Naive thymus-derived CD4-positive, alpha-beta T cell (primary cell): ENCODE measurements at regions of chr1 and their contacts with region 1.

Region 1: GRCh38 chr1:184075055-184076029 is 23.8 kb downstream of the TSEN15 start:
- DNase-seq: peak in 4 of 9 donors; percentile 2 to 34 (median 12)
- ATAC-seq: peak; percentile 75
- H3K4me3 ChIP-seq: no peak overlapping the region
- H3K4me3 Mint-ChIP-seq: no peak overlapping the region
- H3K27ac ChIP-seq: peak overlapping the region; percentile 32
- H3K27ac Mint-ChIP-seq: peak overlapping the region in 4 of 9 donors; percentile 7 to 73 (median 40)
- H3K4me1 ChIP-seq: no peaks in the 10 kb centered on the region
- H3K4me1 Mint-ChIP-seq: peaks cover 0 to 5% (median 0%) of the 10 kb centered on the region in 7 donors
- H3K27me3 ChIP-seq: no peaks in the 10 kb centered on the region
- H3K27me3 Mint-ChIP-seq: no peaks in the 10 kb centered on the region

Region 2: GRCh38 chr1:183070923-183071618 is 1004.3 kb before region 1 on chr1:
- CTCF ChIA-PET with region 1: no interaction called
- POLR2A ChIA-PET with region 1: no interaction called
- intact Hi-C with region 1: loop called in 1 of 2 experiments (anchors 5 kb)
- DNase-seq: no peak
- ATAC-seq: no peak
- H3K4me3 ChIP-seq: no peak overlapping the region
- H3K4me3 Mint-ChIP-seq: no peak overlapping the region
- H3K27ac ChIP-seq: no peak overlapping the region
- H3K27ac Mint-ChIP-seq: no peak overlapping the region
- H3K4me1 ChIP-seq: no peaks in the 10 kb centered on the region
- H3K4me1 Mint-ChIP-seq: peaks cover 0 to 8% (median 0%) of the 10 kb centered on the region in 7 donors
- H3K27me3 ChIP-seq: no peaks in the 10 kb centered on the region
- H3K27me3 Mint-ChIP-seq: peaks cover 4 to 28% (median 13%) of the 10 kb centered on the region in 5 donors

Region 3: GRCh38 chr1:184222652-184223052 is 147.3 kb after region 1 on chr1:
- CTCF ChIA-PET with region 1: no interaction called
- POLR2A ChIA-PET with region 1: no interaction called
- intact Hi-C with region 1: loop called (anchors 1 kb)
- DNase-seq: peak in 6 of 9 donors; percentile 11 to 31 (median 26)
- ATAC-seq: peak; percentile 60
- H3K4me3 ChIP-seq: no peak overlapping the region
- H3K4me3 Mint-ChIP-seq: peak overlapping the region in 2 of 10 donors; percentile 3 to 5
- H3K27ac ChIP-seq: no peak overlapping the region
- H3K27ac Mint-ChIP-seq: peak overlapping the region in 1 of 9 donors; percentile 6
- H3K4me1 ChIP-seq: no peaks in the 10 kb centered on the region
- H3K4me1 Mint-ChIP-seq: peaks cover 0 to 4% (median 0%) of the 10 kb centered on the region in 7 donors
- H3K27me3 ChIP-seq: no peaks in the 10 kb centered on the region
- H3K27me3 Mint-ChIP-seq: peaks cover 0 to 19% (median 9%) of the 10 kb centered on the region in 5 donors

Region 4: GRCh38 chr1:184664042-184664655 is 588.8 kb after region 1 on chr1:
- CTCF ChIA-PET with region 1: no interaction called
- POLR2A ChIA-PET with region 1: no interaction called
- intact Hi-C with region 1: loop called in 1 of 2 experiments (anchors 5 kb)
- DNase-seq: peak in 3 of 9 donors; percentile 11 to 58 (median 22)
- ATAC-seq: peak; percentile 76
- H3K4me3 ChIP-seq: no peak overlapping the region
- H3K4me3 Mint-ChIP-seq: peak overlapping the region in 3 of 10 donors; percentile 21 to 39 (median 32)
- H3K27ac ChIP-seq: no peak overlapping the region
- H3K27ac Mint-ChIP-seq: no peak overlapping the region
- H3K4me1 ChIP-seq: no peaks in the 10 kb centered on the region
- H3K4me1 Mint-ChIP-seq: peaks cover 0 to 8% (median 5%) of the 10 kb centered on the region in 7 donors
- H3K27me3 ChIP-seq: no peaks in the 10 kb centered on the region
- H3K27me3 Mint-ChIP-seq: peaks cover 12 to 28% (median 20%) of the 10 kb centered on the region in 5 donors

Region 5: DNA sequence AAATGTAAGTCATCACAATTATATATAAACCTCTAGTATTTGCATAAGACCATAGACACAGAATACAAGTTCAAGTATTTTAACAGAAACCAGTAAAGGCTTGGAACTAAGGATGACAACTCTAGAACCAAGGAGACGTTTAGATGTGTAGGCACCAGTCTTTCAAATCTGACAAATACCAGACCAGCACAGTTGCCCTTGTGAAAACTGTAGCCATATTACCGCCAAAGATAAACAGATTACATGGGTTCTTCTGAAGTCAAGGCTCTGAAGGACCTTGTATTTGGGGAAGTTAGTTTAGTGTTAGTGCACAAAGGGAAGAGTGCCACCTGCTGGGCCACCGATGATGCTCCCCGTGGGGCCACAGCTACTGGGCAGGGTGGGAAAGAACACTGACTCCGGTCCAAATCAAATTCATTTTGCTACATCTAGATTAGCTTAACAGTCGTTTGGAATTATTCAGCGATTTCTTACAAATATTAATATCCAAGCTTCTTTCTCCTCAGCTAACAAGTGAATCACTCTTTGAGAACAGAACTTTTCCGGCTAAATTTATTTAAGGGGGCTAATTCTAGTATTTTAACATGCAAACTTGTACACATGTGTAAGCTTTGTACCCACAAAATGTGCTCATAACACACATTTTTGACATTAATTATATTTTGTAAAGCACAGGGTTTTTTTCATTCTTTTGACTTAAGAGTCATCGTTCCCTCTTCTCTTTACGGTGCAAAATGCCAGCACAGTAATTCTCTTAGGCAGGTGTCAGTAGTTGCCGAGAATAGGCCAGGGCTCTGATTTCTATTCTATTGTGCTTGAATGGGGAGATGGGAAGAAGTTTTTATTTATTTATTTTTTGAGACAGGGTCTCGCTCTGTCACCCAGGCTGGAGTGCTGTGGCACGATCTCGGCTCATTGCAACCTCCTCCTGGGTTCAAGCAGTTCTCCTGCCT is 906.9 kb after region 1 on chr1:
- CTCF ChIA-PET with region 1: no interaction called
- POLR2A ChIA-PET with region 1: interaction called, 4 read pairs
- intact Hi-C with region 1: loop called (anchors 1 kb)
- DNase-seq: peak; percentile 28 to 69 (median 47)
- ATAC-seq: peak; percentile 99
- H3K4me3 ChIP-seq: no peak overlapping the region
- H3K4me3 Mint-ChIP-seq: no peak overlapping the region
- H3K27ac ChIP-seq: no peak overlapping the region
- H3K27ac Mint-ChIP-seq: no peak overlapping the region
- H3K4me1 ChIP-seq: no peaks in the 10 kb centered on the region
- H3K4me1 Mint-ChIP-seq: peaks cover 0 to 7% (median 0%) of the 10 kb centered on the region in 7 donors
- H3K27me3 ChIP-seq: no peaks in the 10 kb centered on the region
- H3K27me3 Mint-ChIP-seq: peaks cover 17 to 45% (median 29%) of the 10 kb centered on the region in 5 donors